ENCODE measurements at regions of chr22 and their contacts with region 1.

Region 1: DNA sequence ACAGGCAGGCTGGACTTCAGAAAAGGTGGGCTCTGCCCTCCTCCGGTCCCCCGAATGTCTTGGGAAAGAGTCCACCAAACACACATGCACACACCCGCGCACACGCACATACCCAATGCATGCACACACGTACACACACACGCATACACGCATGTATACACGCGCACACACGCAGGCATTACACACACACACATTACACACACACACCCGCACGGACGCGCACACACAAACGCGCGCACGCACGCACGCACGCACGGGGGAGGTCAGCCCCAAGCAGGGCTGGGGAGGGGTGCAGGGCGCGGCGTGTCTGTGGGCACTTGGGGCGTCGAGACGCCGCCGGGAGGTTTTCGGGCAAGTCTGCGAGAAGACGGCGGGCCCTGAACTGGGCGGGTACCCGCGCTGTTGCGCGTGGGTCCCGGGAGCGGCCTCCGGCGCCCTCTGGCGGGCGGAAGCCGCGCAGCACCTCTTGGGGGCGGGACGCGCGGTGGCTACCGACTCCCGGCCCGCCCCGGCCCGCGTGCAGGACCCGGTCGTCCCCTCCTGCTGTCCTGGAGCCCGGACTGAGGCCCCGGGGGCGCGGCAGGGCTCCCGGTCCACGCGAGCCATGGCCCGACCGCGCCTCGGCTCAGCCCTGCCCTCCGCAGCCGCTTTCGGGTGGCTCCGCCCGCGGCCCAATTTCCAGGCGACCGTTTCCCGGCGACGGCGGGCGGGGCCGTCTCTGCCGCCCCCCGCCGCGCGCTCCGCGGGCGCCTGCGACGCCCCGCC is 3.6 kb downstream of the SEPTIN5 start:
- DNase-seq: peak; percentile 86
- H3K4me3 ChIP-seq: peak overlapping the region; percentile 44 to 76 (median 62)
- H3K27ac ChIP-seq: peak overlapping the region; percentile 4 to 71 (median 61)
- H3K4me1 ChIP-seq: peaks cover 0 to 44% (median 31%) of the 10 kb centered on the region in 4 donors
- H3K27me3 ChIP-seq: peaks cover 5 to 34% (median 20%) of the 10 kb centered on the region in 3 donors
- CTCF ChIP-seq: peak; percentile 27 to 98 (median 52)
- EP300 ChIP-seq: no peak
- POLR2A ChIP-seq: no peak

Region 2: DNA sequence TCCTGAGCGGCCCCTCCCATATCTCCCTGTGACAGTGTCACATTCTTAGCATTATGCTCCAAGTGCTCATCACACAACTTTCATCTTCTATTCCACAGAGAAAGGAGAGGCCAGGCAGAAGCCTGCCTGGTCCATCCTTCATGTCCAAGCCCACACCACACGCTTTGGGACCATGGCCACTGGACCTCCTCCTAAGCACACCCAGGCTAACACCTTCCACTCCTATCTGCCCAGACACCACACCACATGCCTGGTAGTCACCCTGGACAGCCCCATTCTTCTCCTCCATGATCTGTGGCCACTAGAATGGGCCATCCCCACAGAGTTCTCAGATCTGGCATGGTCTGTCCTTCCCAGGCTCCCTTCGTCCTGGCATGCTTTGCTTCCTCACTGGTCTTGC is 341.6 kb before region 1 on chr22:
- intact Hi-C with region 1: no loop called
- DNase-seq: no peak
- H3K4me3 ChIP-seq: no peak overlapping the region
- H3K27ac ChIP-seq: no peak overlapping the region
- H3K4me1 ChIP-seq: no peaks in the 10 kb centered on the region
- H3K27me3 ChIP-seq: no peaks in the 10 kb centered on the region
- CTCF ChIP-seq: no peak
- EP300 ChIP-seq: no peak
- POLR2A ChIP-seq: no peak

Region 3: GRCh38 chr22:19679522-19680101 is 38.3 kb before region 1 on chr22:
- intact Hi-C with region 1: loop called (anchors 2 kb)
- DNase-seq: peak; percentile 75
- H3K4me3 ChIP-seq: no peak overlapping the region
- H3K27ac ChIP-seq: no peak overlapping the region
- H3K4me1 ChIP-seq: peaks cover 0 to 4% (median 0%) of the 10 kb centered on the region in 4 donors
- H3K27me3 ChIP-seq: peaks cover 0 to 25% (median 7%) of the 10 kb centered on the region in 3 donors
- CTCF ChIP-seq: peak; percentile 35 to 78 (median 54)
- EP300 ChIP-seq: no peak
- POLR2A ChIP-seq: no peak